ENCODE measurements at regions of chr15 and their contacts with region 1.

Region 1: GRCh38 chr15:31228985-31229826 is 97.4 kb upstream of the KLF13 start:
- DNase-seq: no peak
- H3K4me3 ChIP-seq: no peak overlapping the region
- H3K4me3 Mint-ChIP-seq: no peak overlapping the region
- H3K27ac Mint-ChIP-seq: no peak overlapping the region
- H3K4me1 ChIP-seq: no peaks in the 10 kb centered on the region
- H3K4me1 Mint-ChIP-seq: no peaks in the 10 kb centered on the region
- H3K27me3 ChIP-seq: no peaks in the 10 kb centered on the region; the same call in 1 of the 2 replicates
- H3K27me3 Mint-ChIP-seq: peaks cover 9% of the 10 kb centered on the region
- CTCF ChIP-seq: no peak

Region 2: DNA sequence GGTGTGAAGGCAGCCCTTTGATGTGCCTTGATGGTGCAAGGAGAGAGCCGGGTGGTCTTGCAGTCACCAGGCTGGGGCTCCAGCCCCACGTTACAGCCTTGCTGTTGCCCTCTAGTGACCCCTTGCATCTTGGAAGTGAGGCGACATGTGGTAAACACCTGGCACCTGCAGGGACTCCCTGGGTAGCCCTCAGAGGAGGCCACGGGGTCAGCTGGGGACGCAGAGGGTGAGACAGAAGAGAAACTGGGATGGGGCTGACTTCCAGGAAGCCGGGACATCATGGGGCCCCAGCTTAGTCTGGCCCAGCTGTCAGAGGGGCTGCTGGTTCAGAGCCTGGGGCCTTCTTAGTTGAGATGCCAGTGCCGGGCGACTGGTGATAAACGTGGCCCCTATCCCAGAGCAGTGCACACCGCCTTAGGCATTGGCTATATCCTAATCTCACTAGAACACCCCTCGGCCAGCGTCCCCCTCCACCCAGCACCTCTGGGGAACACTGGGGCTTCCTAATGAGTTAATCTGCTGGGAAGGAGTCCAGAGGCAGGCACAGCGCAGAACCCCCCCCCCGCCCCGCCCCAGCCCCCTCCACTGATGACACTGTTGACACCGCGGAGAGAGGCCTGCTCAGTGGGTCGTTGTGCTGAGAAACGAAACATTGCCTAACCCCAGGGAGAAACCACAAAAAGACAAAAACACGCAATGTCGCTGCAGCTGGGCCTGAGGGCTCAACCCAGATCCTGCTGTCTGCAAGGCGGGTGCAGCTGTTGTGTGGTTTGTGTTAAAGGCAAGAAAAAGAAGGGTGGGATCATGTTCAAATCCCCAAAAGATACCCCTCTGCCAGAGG is 36.9 kb after region 1 on chr15:
- CTCF ChIA-PET with region 1: no interaction called
- POLR2A ChIA-PET with region 1: no interaction called
- intact Hi-C with region 1: loop called (anchors 5 kb)
- DNase-seq: peak in 1 of 2 experiments; percentile 33
- H3K4me3 ChIP-seq: no peak overlapping the region
- H3K4me3 Mint-ChIP-seq: no peak overlapping the region
- H3K27ac Mint-ChIP-seq: peak overlapping the region; percentile 65
- H3K4me1 ChIP-seq: peaks cover 12% of the 10 kb centered on the region
- H3K4me1 Mint-ChIP-seq: peaks cover 8% of the 10 kb centered on the region
- H3K27me3 ChIP-seq: no peaks in the 10 kb centered on the region
- H3K27me3 Mint-ChIP-seq: no peaks in the 10 kb centered on the region
- CTCF ChIP-seq: no peak

Region 3: GRCh38 chr15:31292391-31293015 is 63.3 kb after region 1 on chr15:
- CTCF ChIA-PET with region 1: no interaction called
- POLR2A ChIA-PET with region 1: no interaction called
- intact Hi-C with region 1: no loop called
- DNase-seq: no peak
- H3K4me3 ChIP-seq: no peak overlapping the region
- H3K4me3 Mint-ChIP-seq: no peak overlapping the region
- H3K27ac Mint-ChIP-seq: no peak overlapping the region
- H3K4me1 ChIP-seq: peaks cover 22% of the 10 kb centered on the region
- H3K4me1 Mint-ChIP-seq: peaks cover 23% of the 10 kb centered on the region
- H3K27me3 ChIP-seq: no peaks in the 10 kb centered on the region
- H3K27me3 Mint-ChIP-seq: peaks cover 14% of the 10 kb centered on the region
- CTCF ChIP-seq: no peak

Region 4: DNA sequence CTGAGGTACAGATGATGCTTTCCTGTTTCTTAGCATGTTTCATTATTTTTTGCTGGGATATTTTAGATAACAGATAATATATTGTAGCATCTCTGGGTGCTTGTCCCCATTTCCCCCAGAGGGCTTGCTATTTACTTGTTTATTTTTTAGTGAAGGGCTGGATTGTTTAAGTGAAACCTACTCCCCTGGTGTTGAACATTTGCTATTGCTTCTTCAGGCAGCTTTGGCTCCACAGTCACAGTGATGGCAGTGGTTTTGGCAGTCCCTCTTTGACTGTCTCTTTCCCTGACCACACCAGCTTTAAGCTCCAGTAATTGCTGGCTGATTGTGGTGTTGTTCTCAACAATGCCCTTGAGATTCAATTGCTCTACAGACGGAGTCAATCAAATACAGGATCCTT is 226.3 kb after region 1 on chr15:
- CTCF ChIA-PET with region 1: no interaction called
- POLR2A ChIA-PET with region 1: no interaction called
- intact Hi-C with region 1: no loop called
- DNase-seq: no peak
- H3K4me3 ChIP-seq: no peak overlapping the region
- H3K4me3 Mint-ChIP-seq: no peak overlapping the region
- H3K27ac Mint-ChIP-seq: no peak overlapping the region
- H3K4me1 ChIP-seq: no peaks in the 10 kb centered on the region
- H3K4me1 Mint-ChIP-seq: no peaks in the 10 kb centered on the region
- H3K27me3 ChIP-seq: no peaks in the 10 kb centered on the region; the same call in 1 of the 2 replicates
- H3K27me3 Mint-ChIP-seq: peaks cover 12% of the 10 kb centered on the region
- CTCF ChIP-seq: peak; percentile 1 to 12

Measured in Caco-2 (cell line).